ENCODE measurements at regions of chr17 and their contacts with region 1.

Region 1: GRCh38 chr17:70343114-70343513 is 173.8 kb downstream of the KCNJ2 start:
- DNase-seq: no peak
- H3K4me3 ChIP-seq: no peak overlapping the region
- H3K27ac ChIP-seq: no peak overlapping the region
- H3K4me1 ChIP-seq: no peaks in the 10 kb centered on the region
- H3K27me3 ChIP-seq: no peaks in the 10 kb centered on the region
- CTCF ChIP-seq: no peak
- POLR2A ChIP-seq: no peak

Region 2: GRCh38 chr17:69117855-69118784 is 1225.0 kb before region 1 on chr17:
- intact Hi-C with region 1: no loop called
- DNase-seq: no peak
- H3K4me3 ChIP-seq: no peak overlapping the region
- H3K27ac ChIP-seq: no peak overlapping the region
- H3K4me1 ChIP-seq: no peaks in the 10 kb centered on the region
- H3K27me3 ChIP-seq: no peaks in the 10 kb centered on the region
- CTCF ChIP-seq: no peak
- POLR2A ChIP-seq: no peak

Region 3: DNA sequence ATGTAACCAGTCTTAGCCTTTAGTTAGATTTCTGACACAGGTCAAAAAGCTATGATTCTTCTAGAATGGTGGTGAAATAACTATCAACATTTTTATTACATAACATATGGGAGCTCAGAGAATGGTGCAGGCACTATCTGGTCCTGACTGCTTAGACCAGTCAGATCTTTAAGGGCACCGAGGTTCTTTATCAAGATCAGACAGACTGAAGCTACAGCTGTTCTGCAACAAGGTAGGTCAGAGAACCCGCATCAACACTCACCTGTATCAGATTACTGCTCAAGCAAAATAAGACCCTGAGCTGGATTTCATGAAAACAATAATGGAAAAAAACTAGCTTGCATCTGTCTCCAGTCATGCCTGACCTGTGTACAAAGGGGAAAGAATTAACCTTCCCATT is 13.4 kb before region 1 on chr17:
- intact Hi-C with region 1: loop called (anchors 2 kb)
- DNase-seq: no peak
- H3K4me3 ChIP-seq: no peak overlapping the region
- H3K27ac ChIP-seq: no peak overlapping the region
- H3K4me1 ChIP-seq: no peaks in the 10 kb centered on the region
- H3K27me3 ChIP-seq: no peaks in the 10 kb centered on the region
- CTCF ChIP-seq: no peak
- POLR2A ChIP-seq: no peak

Region 4: DNA sequence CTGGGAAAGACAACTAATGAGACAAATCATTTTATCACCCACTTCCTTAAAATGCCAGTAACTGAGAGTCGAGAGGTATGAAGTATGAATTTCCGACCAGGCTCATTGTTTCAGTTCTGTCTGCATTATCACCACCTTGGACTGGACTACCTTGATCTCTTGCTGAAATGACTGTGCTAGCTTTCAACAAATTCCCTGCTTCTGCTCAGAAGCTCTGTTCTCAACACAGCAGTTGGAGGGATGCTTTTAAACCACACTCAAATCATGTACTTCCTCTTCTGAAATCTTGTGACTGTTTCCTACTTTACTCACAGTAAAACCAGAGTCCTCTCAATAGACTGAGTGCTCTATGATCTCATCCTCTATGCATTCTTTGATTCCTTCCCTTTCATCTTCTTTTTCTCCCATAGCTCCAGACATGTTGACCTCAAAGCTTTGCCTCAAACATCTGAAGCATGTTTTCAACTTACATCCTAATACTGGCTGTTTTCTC is 22.0 kb after region 1 on chr17:
- intact Hi-C with region 1: no loop called
- DNase-seq: no peak
- H3K4me3 ChIP-seq: no peak overlapping the region
- H3K27ac ChIP-seq: no peak overlapping the region
- H3K4me1 ChIP-seq: no peaks in the 10 kb centered on the region
- H3K27me3 ChIP-seq: no peaks in the 10 kb centered on the region
- CTCF ChIP-seq: no peak
- POLR2A ChIP-seq: no peak